Mucosa of descending colon (tissue), 3 donors: ENCODE measurements at regions of chr15 and their contacts with region 1.

Region 1: GRCh38 chr15:85730001-85730820 is 64.5 kb downstream of the KLHL25 start:
- DNase-seq: peak in 1 of 3 donors; percentile 82
- ATAC-seq: peak; percentile 88
- H3K4me3 ChIP-seq: no peak overlapping the region
- H3K4me1 ChIP-seq: no peaks in the 10 kb centered on the region
- CTCF ChIP-seq: peak; percentile 51

Region 2: DNA sequence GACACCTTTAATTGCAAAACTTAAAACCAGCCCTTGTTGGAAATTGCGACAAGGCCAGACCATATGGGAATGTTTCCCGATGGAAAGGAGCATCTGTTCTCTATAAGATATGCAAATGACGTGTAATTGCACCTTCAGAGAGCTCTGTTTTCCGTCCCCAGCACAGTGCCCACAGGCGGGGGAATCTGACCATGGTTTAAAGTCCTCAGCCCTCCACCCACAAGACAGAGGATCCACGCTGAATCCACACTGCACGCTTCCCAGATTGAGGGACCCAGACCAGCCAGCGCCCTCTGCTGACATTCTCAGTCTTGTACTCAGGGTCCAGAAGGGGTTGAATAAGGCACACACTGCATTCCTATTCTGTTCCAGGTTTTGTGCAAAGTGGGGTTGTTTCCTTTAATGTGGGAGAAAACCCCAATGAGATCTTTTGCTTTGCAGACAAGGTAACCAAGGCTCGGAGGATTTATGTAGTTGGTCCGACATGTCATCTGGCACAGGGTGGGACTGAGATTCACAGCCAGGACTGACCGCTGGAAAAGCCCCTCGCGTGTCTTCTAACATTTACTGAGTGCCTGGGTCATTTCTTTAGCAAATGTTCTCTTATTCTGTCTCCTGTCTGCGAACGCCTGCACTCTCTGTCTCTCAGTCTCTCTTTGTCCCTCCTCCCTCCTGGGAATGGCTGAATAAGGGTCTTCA is 101.4 kb after region 1 on chr15:
- intact Hi-C with region 1: loop called (anchors 5 kb)
- DNase-seq: peak; percentile 61 to 86 (median 74)
- ATAC-seq: peak; percentile 87
- H3K4me3 ChIP-seq: no peak overlapping the region
- H3K4me1 ChIP-seq: peaks cover 5% of the 10 kb centered on the region
- CTCF ChIP-seq: peak; percentile 24

Region 3: DNA sequence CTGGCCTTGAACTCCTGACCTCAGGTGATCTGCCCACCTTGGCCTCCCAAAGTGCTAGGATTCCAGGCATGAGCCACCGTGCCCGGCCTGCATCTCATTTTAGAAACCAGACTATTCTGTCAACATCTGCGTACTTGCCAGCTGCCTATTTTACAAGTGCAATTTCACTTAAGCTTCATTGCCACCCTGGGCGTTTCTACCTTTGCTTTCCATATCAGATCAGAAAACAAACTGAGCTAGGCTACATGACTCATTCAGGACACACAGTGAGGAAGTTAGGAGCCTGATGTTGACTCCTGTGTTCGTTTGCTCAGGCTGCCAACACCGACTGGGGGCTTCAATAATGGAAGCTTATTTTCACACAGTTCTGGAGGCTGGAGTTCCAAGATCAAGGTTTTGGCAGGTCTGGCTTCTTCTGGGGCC is 106.8 kb after region 1 on chr15:
- intact Hi-C with region 1: loop called (anchors 5 kb)
- DNase-seq: peak; percentile 59 to 86 (median 73)
- ATAC-seq: peak; percentile 79
- H3K4me3 ChIP-seq: no peak overlapping the region
- H3K4me1 ChIP-seq: peaks cover 44% of the 10 kb centered on the region
- CTCF ChIP-seq: no peak